HCT116 (cell line): ENCODE measurements at regions of chr2 and their contacts with region 1.

Region 1: GRCh38 chr2:223944703-223945531 is at the start of gene WDFY1:
- DNase-seq: peak; percentile 59
- ATAC-seq: peak; percentile 84
- H3K4me3 ChIP-seq: peak within 1 kb of the TSS; percentile 75 to 95
- H3K27ac ChIP-seq: peak within 1 kb of the TSS; percentile 74
- H3K4me1 ChIP-seq: peaks cover 18 to 38% of the 10 kb centered on the region in 2 experiments
- H3K27me3 ChIP-seq: no peaks in the 10 kb centered on the region
- CTCF ChIP-seq: no peak
- POLR2A ChIP-seq: peak; percentile 58
- RAD21 ChIP-seq: peak; percentile 36
- total RNA-seq, gene WDFY1: 44.7 TPM

Region 2: GRCh38 chr2:223122781-223123180 is 822.1 kb before region 1 on chr2:
- CTCF ChIA-PET with region 1: no interaction called
- POLR2A ChIA-PET with region 1: no interaction called
- RAD21 ChIA-PET with region 1: no interaction called
- intact Hi-C with region 1: no loop called
- DNase-seq: no peak
- ATAC-seq: no peak
- H3K4me3 ChIP-seq: no peak overlapping the region
- H3K27ac ChIP-seq: no peak overlapping the region
- H3K4me1 ChIP-seq: no peaks in the 10 kb centered on the region
- H3K27me3 ChIP-seq: no peaks in the 10 kb centered on the region
- CTCF ChIP-seq: no peak
- POLR2A ChIP-seq: no peak
- RAD21 ChIP-seq: no peak

Region 3: DNA sequence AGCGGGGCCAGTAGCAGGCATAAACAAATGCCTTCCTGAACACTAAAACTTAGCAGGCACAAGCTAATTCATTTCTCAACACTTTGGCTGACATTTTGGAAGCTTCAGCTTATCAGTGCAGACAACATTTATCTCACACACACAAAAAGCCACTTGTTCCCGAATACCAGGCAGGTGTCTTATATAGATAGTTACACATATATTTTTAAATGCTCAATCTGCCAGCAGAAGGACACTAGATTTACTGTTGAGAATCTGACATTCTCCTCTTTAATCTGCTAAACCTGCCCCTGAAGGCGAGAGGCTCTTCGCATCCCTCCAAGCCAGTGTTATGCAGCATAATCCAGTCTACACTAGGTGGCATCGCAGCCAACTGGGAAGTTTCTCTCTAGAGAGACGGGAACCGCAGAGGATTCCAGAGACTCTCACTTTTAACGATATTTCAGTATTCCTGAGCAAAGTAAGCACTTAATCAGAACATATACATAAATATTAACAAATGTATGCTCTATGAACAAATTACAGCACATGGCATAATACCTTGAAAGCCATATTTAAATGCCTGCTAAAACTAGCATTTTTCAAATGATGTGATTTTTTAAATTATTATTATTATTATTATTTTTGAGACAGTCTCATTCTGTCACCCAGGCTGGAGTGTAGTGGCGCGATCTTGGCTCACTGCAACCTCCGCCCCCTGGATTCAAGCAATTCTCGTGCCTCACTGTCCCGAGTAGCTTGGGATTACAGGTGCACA is 252.5 kb before region 1 on chr2:
- CTCF ChIA-PET with region 1: no interaction called
- POLR2A ChIA-PET with region 1: no interaction called
- RAD21 ChIA-PET with region 1: no interaction called
- intact Hi-C with region 1: loop called (anchors 10 kb)
- DNase-seq: peak; percentile 59
- ATAC-seq: peak; percentile 85
- H3K4me3 ChIP-seq: no peak overlapping the region
- H3K27ac ChIP-seq: peak overlapping the region; percentile 4; the same call in 1 of the 2 replicates
- H3K4me1 ChIP-seq: peaks cover 34 to 51% of the 10 kb centered on the region in 2 experiments
- H3K27me3 ChIP-seq: no peaks in the 10 kb centered on the region
- CTCF ChIP-seq: peak; percentile 71 to 77 (median 72)
- POLR2A ChIP-seq: no peak
- RAD21 ChIP-seq: peak; percentile 86

Region 4: GRCh38 chr2:223837287-223838061 is 107.4 kb before region 1 on chr2 and contains the start of gene AP1S3:
- CTCF ChIA-PET with region 1: no interaction called
- POLR2A ChIA-PET with region 1: no interaction called
- RAD21 ChIA-PET with region 1: no interaction called
- intact Hi-C with region 1: loop called (anchors 10 kb)
- DNase-seq: peak; percentile 65
- ATAC-seq: peak; percentile 91
- H3K4me3 ChIP-seq: peak within 1 kb of the TSS; percentile 79 to 93
- H3K27ac ChIP-seq: peak within 1 kb of the TSS; percentile 91
- H3K4me1 ChIP-seq: peaks cover 38 to 39% of the 10 kb centered on the region in 2 experiments
- H3K27me3 ChIP-seq: no peaks in the 10 kb centered on the region
- CTCF ChIP-seq: 0 out of 6 replicates have a peak, but pooled peaks of 1 of the 3 experiments have one; percentile 31
- POLR2A ChIP-seq: peak; percentile 1
- RAD21 ChIP-seq: 0 out of 2 replicates have a peak, but pooled peaks have one; percentile 1
- total RNA-seq, gene AP1S3: 185 TPM